Lower leg skin (tissue), 4 donors: ENCODE measurements at regions of chr1 and their contacts with region 1.

Region 1: GRCh38 chr1:112576240-112576639 is 42.7 kb downstream of the ST7L start:
- DNase-seq: no peak
- H3K4me3 ChIP-seq: no peak overlapping the region
- CTCF ChIP-seq: no peak
- POLR2A ChIP-seq: no peak

Region 2: GRCh38 chr1:112542206-112542973 is 33.9 kb before region 1 on chr1:
- intact Hi-C with region 1: loop called (anchors 2 kb)
- DNase-seq: no peak
- H3K4me3 ChIP-seq: no peak overlapping the region
- CTCF ChIP-seq: no peak
- POLR2A ChIP-seq: no peak